CD14-positive monocyte (primary cell): ENCODE measurements at regions of chr6 and their contacts with region 1.

Region 1: GRCh38 chr6:22062807-22063408 is 233.9 kb downstream of the PRL start:
- DNase-seq: peak; percentile 73 to 87 (median 78)
- H3K4me3 ChIP-seq: peak overlapping the region; percentile 13 to 75 (median 29)
- H3K4me3 Mint-ChIP-seq: peak overlapping the region; percentile 78 to 95
- H3K27ac ChIP-seq: peak overlapping the region; percentile 50 to 86
- H3K27ac Mint-ChIP-seq: peak overlapping the region; percentile 77 to 94 (median 85)
- H3K4me1 ChIP-seq: peaks cover 18 to 20% of the 10 kb centered on the region in 2 donors
- H3K4me1 Mint-ChIP-seq: peaks cover 35% of the 10 kb centered on the region
- H3K27me3 ChIP-seq: no peaks in the 10 kb centered on the region
- H3K27me3 Mint-ChIP-seq: no peaks in the 10 kb centered on the region
- CTCF ChIP-seq: no peak

Region 2: DNA sequence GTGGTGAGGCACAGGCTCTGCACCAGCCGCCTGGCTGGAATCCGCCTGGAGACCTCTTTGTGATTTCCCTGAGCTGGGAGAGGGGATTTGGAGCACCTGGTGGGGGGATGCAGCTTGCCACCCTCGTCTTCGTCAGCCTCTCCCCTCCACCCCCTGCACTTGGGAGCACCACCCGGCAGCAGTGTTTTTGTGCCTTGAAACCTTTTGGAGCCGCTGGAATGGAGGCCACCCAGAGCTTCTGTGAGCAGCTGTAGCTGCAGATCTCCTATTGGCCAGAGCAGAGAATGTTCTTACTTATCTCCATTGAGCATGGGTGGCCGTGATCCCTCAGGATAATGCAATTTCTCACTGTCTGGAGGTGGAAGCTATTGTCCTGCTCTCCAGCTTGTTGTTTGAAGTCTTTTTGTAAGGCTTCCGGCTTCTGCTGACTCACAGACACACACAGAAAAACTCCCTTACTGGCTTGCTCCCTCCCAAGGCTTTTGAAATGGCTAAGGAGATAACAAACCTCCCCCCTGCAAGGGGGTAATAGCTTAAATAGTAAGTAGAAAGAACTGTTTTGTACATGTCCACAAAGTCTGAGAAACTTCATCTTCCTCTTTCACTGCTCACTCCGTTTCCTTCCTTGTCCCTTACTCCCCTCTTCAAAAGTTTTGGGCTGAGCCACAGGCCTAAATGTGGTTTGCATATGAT is 37.3 kb before region 1 on chr6:
- intact Hi-C with region 1: loop called in 1 of 2 experiments (anchors 5 kb)
- DNase-seq: peak; percentile 68 to 85 (median 72)
- H3K4me3 ChIP-seq: peak overlapping the region; percentile 38 to 74 (median 49)
- H3K4me3 Mint-ChIP-seq: peak overlapping the region; percentile 70 to 92
- H3K27ac ChIP-seq: peak overlapping the region; percentile 94 to 95
- H3K27ac Mint-ChIP-seq: peak overlapping the region; percentile 90 to 99 (median 96)
- H3K4me1 ChIP-seq: peaks cover 60 to 65% of the 10 kb centered on the region in 2 donors
- H3K4me1 Mint-ChIP-seq: peaks cover 61% of the 10 kb centered on the region
- H3K27me3 ChIP-seq: no peaks in the 10 kb centered on the region
- H3K27me3 Mint-ChIP-seq: no peaks in the 10 kb centered on the region
- CTCF ChIP-seq: no peak

Region 3: GRCh38 chr6:22113026-22113766 is 50.3 kb after region 1 on chr6:
- intact Hi-C with region 1: no loop called
- DNase-seq: peak in 2 of 3 donors; percentile 1 to 34
- H3K4me3 ChIP-seq: no peak overlapping the region
- H3K4me3 Mint-ChIP-seq: no peak overlapping the region
- H3K27ac ChIP-seq: no peak overlapping the region
- H3K27ac Mint-ChIP-seq: no peak overlapping the region
- H3K4me1 ChIP-seq: no peaks in the 10 kb centered on the region
- H3K4me1 Mint-ChIP-seq: peaks cover 7% of the 10 kb centered on the region
- H3K27me3 ChIP-seq: no peaks in the 10 kb centered on the region
- H3K27me3 Mint-ChIP-seq: no peaks in the 10 kb centered on the region
- CTCF ChIP-seq: no peak